ENCODE measurements at regions of chr4 and their contacts with region 1.

Region 1: DNA sequence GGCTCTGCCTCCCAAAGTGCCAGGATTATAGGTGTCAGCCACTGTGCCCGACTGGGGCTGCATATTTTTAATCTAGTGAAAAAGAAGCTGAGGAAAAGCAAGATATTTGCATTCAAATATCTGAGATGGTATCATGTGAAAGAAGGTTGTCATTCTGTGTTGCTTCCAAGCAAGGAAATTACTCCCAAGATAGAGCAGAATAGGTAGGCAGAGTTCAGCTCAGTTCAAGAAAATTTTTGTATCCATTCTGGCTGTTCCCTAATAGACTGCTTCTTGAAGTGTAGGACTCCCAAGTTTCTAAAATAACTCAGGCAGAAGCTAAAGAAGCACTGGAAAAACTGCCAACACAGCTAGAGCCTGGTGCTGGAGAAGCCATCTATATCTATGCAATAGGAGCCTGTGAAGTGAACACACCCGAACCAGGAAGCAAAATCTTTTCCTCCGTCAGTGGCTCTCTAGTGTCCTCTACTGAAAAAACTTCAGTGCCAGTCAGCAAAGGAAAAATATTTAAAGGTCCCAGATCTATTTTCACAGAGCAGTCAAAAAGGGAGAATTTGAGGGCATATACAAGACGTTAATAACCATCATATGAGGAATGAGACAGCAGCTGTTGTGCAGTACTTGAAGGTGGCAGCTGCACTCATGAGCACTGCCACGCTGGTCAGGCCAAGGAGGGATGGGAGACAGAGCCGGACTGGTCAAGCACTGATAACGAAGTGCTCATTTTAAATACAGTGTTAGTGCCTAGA is 14.2 kb downstream of the MCUB start:
- DNase-seq: no peak
- ATAC-seq: no peak
- H3K4me3 Mint-ChIP-seq: no peak overlapping the region
- H3K27ac Mint-ChIP-seq: peak overlapping the region; percentile 33
- H3K4me1 Mint-ChIP-seq: peaks cover 33% of the 10 kb centered on the region
- H3K27me3 Mint-ChIP-seq: no peaks in the 10 kb centered on the region
- CTCF ChIP-seq: no peak

Region 2: DNA sequence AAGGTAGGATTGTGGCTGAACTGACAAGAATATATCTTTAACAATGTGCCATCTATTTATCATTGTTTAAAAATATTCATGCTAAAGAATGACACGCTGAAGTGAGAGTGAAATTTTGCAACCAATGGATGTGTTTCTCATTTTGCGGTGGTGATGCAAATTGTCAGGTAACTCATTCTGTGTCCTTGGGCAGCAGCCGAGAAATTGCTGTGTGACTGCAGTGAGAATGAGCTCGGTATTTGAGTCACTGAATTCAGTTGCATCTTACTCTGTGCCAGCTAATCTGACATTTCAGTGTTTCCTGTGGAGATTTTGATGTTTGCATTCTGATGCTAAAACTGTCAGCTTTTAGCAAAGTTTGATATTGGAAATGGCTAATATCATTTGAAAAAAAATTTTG is 13.9 kb after region 1 on chr4:
- CTCF ChIA-PET with region 1: no interaction called
- POLR2A ChIA-PET with region 1: interaction called, 3 read pairs
- intact Hi-C with region 1: loop called (anchors 2 kb)
- DNase-seq: no peak
- ATAC-seq: peak; percentile 72
- H3K4me3 Mint-ChIP-seq: no peak overlapping the region
- H3K27ac Mint-ChIP-seq: peak overlapping the region; percentile 59
- H3K4me1 Mint-ChIP-seq: peaks cover 58% of the 10 kb centered on the region
- H3K27me3 Mint-ChIP-seq: no peaks in the 10 kb centered on the region
- CTCF ChIP-seq: no peak